ENCODE measurements at regions of chr6 and their contacts with region 1.

Region 1: GRCh38 chr6:156686995-156687788 is 90.0 kb upstream of the ARID1B start:
- DNase-seq: peak; percentile 75
- H3K4me3 Mint-ChIP-seq: peak overlapping the region; percentile 89
- H3K27ac Mint-ChIP-seq: peak overlapping the region; percentile 85
- H3K4me1 Mint-ChIP-seq: peaks cover 18% of the 10 kb centered on the region
- H3K27me3 Mint-ChIP-seq: peaks cover 9% of the 10 kb centered on the region

Region 2: DNA sequence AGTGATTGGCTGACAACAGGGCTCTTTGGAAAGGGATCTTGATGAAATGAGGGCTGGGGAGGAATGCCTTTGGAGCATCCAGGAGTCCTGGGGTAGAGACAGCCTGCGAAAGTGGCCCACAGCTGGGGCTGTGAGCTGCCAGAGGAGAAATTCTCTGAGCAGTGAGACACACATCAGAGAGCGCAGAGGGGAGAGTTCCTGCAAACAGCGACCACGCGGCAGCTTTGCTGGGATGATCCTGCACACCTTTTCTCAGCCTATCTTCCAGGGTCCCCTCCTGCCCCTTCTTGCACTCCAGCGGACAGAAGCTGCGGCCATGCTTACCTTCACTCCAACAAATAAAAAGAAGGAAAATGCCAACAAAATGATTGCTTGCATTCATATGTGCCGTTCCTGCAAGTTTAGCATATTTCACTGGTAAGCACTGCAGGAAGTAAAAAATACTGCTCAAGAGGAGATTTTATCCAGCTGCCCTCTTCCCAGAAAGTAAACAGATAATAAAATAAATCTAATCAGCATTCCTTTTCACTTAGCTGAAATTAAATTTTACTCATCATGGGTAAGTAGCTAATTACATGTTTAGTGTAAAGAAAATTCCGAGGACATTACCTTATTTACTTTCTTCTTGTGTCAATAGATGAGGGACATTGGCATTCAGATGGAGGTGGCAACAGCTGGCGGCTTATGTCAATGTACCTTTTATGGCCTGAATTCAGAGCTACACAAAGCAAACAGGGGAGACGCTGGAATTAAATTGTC is 249.9 kb before region 1 on chr6:
- CTCF ChIA-PET with region 1: no interaction called
- POLR2A ChIA-PET with region 1: no interaction called
- DNase-seq: no peak
- H3K4me3 Mint-ChIP-seq: no peak overlapping the region
- H3K27ac Mint-ChIP-seq: no peak overlapping the region
- H3K4me1 Mint-ChIP-seq: no peaks in the 10 kb centered on the region
- H3K27me3 Mint-ChIP-seq: no peaks in the 10 kb centered on the region

Region 3: DNA sequence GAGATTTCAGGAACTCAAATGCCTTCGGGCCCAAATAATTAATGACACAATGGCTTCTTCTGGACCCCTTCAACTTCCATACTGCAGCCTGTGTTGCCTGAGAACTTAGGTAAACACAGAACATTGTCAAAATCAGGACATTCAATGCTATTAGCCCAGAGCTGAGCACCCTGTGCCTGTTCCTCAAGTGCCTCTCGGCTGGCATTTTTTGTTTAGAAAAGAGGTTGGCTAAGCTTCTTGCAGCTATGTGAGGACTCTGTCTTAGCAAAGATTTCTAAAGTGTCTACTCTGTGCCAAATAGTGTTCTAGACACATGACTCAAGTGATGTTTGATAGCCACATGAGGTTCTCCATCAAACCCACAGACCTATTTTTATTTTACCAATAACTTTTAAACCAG is 199.3 kb before region 1 on chr6:
- CTCF ChIA-PET with region 1: no interaction called
- POLR2A ChIA-PET with region 1: no interaction called
- DNase-seq: no peak
- H3K4me3 Mint-ChIP-seq: no peak overlapping the region
- H3K27ac Mint-ChIP-seq: no peak overlapping the region
- H3K4me1 Mint-ChIP-seq: no peaks in the 10 kb centered on the region
- H3K27me3 Mint-ChIP-seq: no peaks in the 10 kb centered on the region

Region 4: GRCh38 chr6:157021344-157021992 is 334.3 kb after region 1 on chr6:
- CTCF ChIA-PET with region 1: no interaction called
- POLR2A ChIA-PET with region 1: interaction called, 12 read pairs
- DNase-seq: peak; percentile 93
- H3K4me3 Mint-ChIP-seq: peak overlapping the region; percentile 90
- H3K27ac Mint-ChIP-seq: peak overlapping the region; percentile 100
- H3K4me1 Mint-ChIP-seq: peaks cover 52% of the 10 kb centered on the region
- H3K27me3 Mint-ChIP-seq: no peaks in the 10 kb centered on the region

Region 5: GRCh38 chr6:158290659-158291058 is 1603.5 kb after region 1 on chr6:
- CTCF ChIA-PET with region 1: no interaction called
- POLR2A ChIA-PET with region 1: no interaction called
- DNase-seq: peak; percentile 75
- H3K4me3 Mint-ChIP-seq: peak overlapping the region; percentile 69
- H3K27ac Mint-ChIP-seq: peak overlapping the region; percentile 92
- H3K4me1 Mint-ChIP-seq: peaks cover 47% of the 10 kb centered on the region
- H3K27me3 Mint-ChIP-seq: no peaks in the 10 kb centered on the region

Measured in activated CD4-positive, alpha-beta memory T cell treated with anti-CD3 and anti-CD28 coated beads, Interleukin-2, amount 10 ng/mL, durations not matched to agents 7 days and 5 days (primary cell).